Heart right ventricle (tissue), 16 donors: ENCODE measurements at regions of chr15 and their contacts with region 1.

Region 1: DNA sequence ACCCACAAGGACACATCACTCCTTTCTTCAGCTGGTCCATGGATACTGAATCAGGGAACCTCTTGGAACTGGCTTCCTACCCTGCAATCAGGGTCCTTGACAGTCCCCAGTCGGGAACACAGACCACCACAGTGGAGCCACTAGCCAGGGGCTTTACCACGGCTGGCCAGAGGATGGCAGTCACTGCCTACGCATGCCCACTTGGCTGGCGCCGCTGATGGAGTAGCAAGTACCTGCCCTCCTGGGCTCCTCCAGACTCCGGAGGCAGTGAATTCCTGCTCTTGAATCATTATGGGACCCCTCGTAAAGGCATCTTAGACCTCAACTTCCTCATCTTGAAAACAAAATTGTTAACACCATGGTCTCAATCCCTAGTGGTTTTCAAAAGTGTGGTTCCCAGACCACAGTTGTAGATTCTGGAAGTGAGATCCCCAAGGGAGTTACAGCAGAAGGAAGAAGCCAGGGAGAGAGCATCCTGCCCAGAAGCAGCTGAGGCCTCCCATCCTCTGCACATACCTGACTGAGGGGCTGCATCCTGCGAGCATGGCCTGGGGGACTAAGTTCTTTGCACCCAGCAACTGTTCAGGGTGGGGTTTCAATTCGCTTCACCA is 9.1 kb upstream of the SKIC8 start:
- DNase-seq: peak; percentile 52 to 59
- ATAC-seq: peak; percentile 61 to 91 (median 81)
- H3K4me3 ChIP-seq: no peak overlapping the region
- H3K27ac ChIP-seq: no peak overlapping the region
- H3K4me1 ChIP-seq: peaks cover 0 to 9% (median 0%) of the 10 kb centered on the region in 9 donors
- H3K27me3 ChIP-seq: peaks cover 0 to 30% (median 7%) of the 10 kb centered on the region in 7 donors
- CTCF ChIP-seq: peak; percentile 54 to 89 (median 82)

Region 2: GRCh38 chr15:78340231-78341056 is 31.9 kb after region 1 on chr15 and contains the start of gene CRABP1:
- intact Hi-C with region 1: no loop called
- DNase-seq: no peak
- ATAC-seq: peak in 1 of 8 donors; percentile 33
- H3K4me3 ChIP-seq: peak within 1 kb of the TSS in 2 of 10 donors; percentile 20 to 23
- H3K27ac ChIP-seq: no peak within 1 kb of the TSS
- H3K4me1 ChIP-seq: peaks cover 0 to 18% (median 11%) of the 10 kb centered on the region in 9 donors
- H3K27me3 ChIP-seq: peaks cover 18 to 89% (median 74%) of the 10 kb centered on the region in 7 donors
- CTCF ChIP-seq: no peak
- total RNA-seq, gene CRABP1: not detected

Region 3: GRCh38 chr15:78415286-78415685 is 106.8 kb after region 1 on chr15:
- intact Hi-C with region 1: loop called in 5 of 10 experiments (anchors 2 to 5 kb)
- DNase-seq: no peak
- ATAC-seq: peak in 1 of 8 donors; percentile 37
- H3K4me3 ChIP-seq: no peak overlapping the region
- H3K27ac ChIP-seq: no peak overlapping the region
- H3K4me1 ChIP-seq: peaks cover 0 to 5% (median 0%) of the 10 kb centered on the region in 9 donors
- H3K27me3 ChIP-seq: peaks cover 0 to 12% (median 0%) of the 10 kb centered on the region in 7 donors
- CTCF ChIP-seq: peak in 6 of 9 donors; percentile 10 to 28 (median 20)

Region 4: DNA sequence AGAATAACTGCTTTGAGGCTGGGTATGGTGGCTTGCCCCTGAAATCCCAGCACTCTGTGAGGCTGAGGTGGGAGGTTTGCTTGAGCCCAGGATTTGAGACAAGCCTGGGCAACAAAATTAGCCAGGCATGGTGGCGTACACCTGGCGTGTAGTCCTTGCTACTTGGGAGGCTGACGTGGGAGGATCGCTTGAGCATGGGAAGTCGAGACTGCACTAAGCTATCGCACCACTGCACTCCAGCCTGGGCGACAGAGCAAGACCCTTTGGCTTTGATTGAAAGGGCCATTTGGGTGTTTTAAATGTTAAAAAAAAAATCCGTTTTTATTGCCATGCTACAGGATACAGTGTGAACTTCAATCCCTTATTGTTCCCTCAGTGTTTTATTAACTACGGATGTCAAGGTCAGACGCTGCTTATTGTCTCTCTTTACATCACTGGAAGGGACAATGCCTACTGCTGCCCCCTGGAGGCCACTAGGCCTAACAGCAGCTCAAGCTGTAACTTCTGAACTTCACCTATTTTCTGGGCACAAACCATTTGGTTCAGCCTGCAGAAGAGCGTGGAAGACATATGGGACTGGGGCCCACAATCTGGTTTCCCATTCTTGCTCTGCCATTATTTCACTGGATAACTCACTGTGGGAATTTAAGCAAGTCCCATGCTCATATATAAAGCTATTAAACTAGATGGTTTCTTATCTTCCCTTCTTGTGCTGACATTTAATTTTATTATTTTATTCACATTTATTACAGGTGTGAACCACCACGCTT is 114.2 kb after region 1 on chr15:
- intact Hi-C with region 1: loop called (anchors 1 to 5 kb)
- DNase-seq: peak; percentile 52 to 62
- ATAC-seq: peak in 7 of 8 donors; percentile 47 to 81 (median 69)
- H3K4me3 ChIP-seq: no peak overlapping the region
- H3K27ac ChIP-seq: no peak overlapping the region
- H3K4me1 ChIP-seq: peaks cover 0 to 11% (median 0%) of the 10 kb centered on the region in 9 donors
- H3K27me3 ChIP-seq: peaks cover 0 to 8% (median 0%) of the 10 kb centered on the region in 7 donors
- CTCF ChIP-seq: peak; percentile 81 to 96 (median 94)

Region 5: DNA sequence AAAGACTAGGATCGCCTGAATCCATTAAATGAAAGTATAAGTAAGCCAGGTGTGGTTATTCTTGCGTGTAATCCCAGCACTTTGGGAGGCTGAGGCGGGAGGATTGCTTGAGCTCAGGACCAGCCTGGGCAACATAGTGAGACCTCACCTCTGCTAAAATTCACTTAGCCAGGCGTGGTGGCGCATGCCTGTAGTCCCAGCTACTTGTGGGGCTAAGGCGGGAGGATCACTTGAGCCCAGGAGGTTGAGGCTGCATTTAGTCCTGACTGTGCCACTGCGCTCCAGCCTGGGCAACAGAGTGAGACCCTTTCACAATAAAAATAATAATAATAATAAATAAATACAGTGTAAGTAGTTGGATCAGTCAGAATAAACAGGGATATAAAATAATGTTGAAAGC is 173.4 kb after region 1 on chr15:
- intact Hi-C with region 1: loop called in 5 of 10 experiments (anchors 2 to 5 kb)
- DNase-seq: no peak
- ATAC-seq: no peak
- H3K4me3 ChIP-seq: no peak overlapping the region
- H3K27ac ChIP-seq: no peak overlapping the region
- H3K4me1 ChIP-seq: no peaks in the 10 kb centered on the region
- H3K27me3 ChIP-seq: no peaks in the 10 kb centered on the region
- CTCF ChIP-seq: no peak

Region 6: GRCh38 chr15:78506971-78507830 is 198.7 kb after region 1 on chr15 and contains the start of gene HYKK:
- intact Hi-C with region 1: loop called in 1 of 10 experiments (anchors 10 kb)
- DNase-seq: peak; percentile 86 to 93
- ATAC-seq: peak; percentile 94 to 99 (median 97)
- H3K4me3 ChIP-seq: peak within 1 kb of the TSS; percentile 51 to 96 (median 79)
- H3K27ac ChIP-seq: peak within 1 kb of the TSS in 9 of 10 donors; percentile 18 to 74 (median 57)
- H3K4me1 ChIP-seq: peaks cover 4 to 16% (median 9%) of the 10 kb centered on the region in 9 donors
- H3K27me3 ChIP-seq: peaks cover 0 to 15% (median 0%) of the 10 kb centered on the region in 7 donors
- CTCF ChIP-seq: peak in 2 of 9 donors; percentile 9 to 22
- total RNA-seq, gene HYKK: 4.3 to 7.7 (median 7.1) TPM